CD4-positive, alpha-beta T cell (primary cell): ENCODE measurements at regions of chr19 and their contacts with region 1.

Region 1: DNA sequence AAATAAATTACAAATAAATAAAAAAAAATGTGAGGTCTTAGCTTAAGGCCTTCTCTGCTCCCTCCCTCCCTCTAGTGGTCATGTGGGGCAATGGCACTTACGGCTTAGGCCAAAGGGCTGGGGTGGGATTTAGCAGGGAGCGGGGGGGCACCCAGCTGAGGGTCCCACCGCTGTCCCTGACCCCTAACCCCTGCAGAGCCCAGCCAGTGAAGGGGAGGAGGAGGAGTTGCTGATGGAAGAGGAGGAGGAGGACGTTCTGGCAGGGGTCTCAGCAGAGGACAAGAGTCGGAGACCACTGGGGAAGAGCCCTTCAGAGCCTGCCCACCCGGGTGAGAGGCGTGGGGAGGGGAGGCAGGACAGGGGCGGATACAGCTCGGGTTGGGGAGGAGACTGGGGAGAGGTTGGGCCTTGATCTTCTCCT is 9.3 kb downstream of the MPND start:
- DNase-seq: peak; percentile 43 to 82 (median 57)
- ATAC-seq: peak; percentile 94
- H3K4me3 ChIP-seq: no peak overlapping the region
- H3K4me3 Mint-ChIP-seq: no peak overlapping the region
- H3K27ac ChIP-seq: no peak overlapping the region
- H3K27ac Mint-ChIP-seq: no peak overlapping the region
- H3K4me1 ChIP-seq: no peaks in the 10 kb centered on the region
- H3K4me1 Mint-ChIP-seq: no peaks in the 10 kb centered on the region
- H3K27me3 ChIP-seq: no peaks in the 10 kb centered on the region
- H3K27me3 Mint-ChIP-seq: no peaks in the 10 kb centered on the region
- CTCF ChIP-seq: peak; percentile 87

Region 2: DNA sequence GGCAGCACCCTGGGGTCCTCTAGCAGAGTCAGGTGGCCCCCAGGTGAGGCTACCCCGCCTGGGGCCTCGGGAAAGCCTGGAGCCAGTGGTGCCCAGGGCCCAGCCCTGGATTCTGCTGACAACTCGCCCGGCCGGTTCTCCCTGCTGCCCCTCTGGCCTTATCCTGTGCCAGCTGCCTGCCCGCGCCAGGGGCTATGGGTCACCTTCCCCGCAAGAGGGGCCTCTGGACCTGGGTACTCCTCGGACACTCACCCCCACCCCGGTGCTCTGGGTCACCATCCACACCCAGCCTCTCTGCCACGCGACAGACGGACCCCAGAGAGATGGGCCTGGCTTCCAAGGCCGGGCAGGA is 310.0 kb before region 1 on chr19:
- CTCF ChIA-PET with region 1: no interaction called
- POLR2A ChIA-PET with region 1: no interaction called
- intact Hi-C with region 1: no loop called
- DNase-seq: no peak
- ATAC-seq: no peak
- H3K4me3 ChIP-seq: no peak overlapping the region
- H3K4me3 Mint-ChIP-seq: no peak overlapping the region
- H3K27ac ChIP-seq: no peak overlapping the region
- H3K27ac Mint-ChIP-seq: no peak overlapping the region
- H3K4me1 ChIP-seq: peaks cover 14% of the 10 kb centered on the region
- H3K4me1 Mint-ChIP-seq: peaks cover 7% of the 10 kb centered on the region
- H3K27me3 ChIP-seq: no peaks in the 10 kb centered on the region
- H3K27me3 Mint-ChIP-seq: no peaks in the 10 kb centered on the region
- CTCF ChIP-seq: no peak

Region 3: DNA sequence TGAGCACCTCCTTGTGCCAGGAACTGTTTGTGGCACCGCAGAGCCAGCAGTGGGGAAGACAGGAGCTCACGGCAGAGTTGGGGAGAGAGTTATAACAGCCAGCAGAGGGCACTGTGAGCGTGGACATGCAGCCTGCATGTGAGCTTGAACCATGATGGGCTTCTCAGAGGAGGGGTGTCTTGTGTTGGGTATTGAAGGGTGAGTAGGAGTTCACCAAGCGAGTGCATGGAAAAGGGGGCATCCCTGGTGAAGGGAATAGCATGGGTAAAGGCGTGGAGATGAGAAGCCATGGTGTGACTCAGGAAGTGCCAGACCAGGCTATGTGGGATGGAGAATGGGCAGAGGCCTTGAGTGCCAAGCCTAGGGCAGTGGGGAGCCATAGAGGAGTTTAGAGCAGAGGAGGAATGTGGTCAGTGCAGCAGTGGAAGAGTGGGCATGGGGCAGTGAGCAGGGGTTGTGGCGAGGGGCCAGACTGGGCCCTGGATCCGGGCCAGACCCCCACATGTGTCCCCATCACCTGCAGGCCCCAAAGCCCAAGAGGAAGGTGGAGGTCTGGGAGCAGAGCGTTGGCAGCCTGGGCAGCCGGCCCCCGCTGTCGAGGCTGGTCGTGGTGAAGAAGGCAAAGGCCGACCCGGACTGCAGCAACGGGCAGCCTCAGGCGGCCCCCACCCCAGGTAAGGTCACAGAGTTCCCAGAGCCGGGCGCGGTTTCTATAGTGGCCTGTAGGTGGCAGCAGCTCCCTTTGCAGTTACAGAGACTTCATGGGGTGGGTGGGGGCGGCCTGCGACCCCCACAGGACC is 85.4 kb before region 1 on chr19:
- CTCF ChIA-PET with region 1: interaction called, 36 read pairs
- POLR2A ChIA-PET with region 1: no interaction called
- intact Hi-C with region 1: loop called (anchors 1 kb)
- DNase-seq: peak; percentile 44 to 75 (median 56)
- ATAC-seq: peak; percentile 70
- H3K4me3 ChIP-seq: no peak overlapping the region
- H3K4me3 Mint-ChIP-seq: no peak overlapping the region
- H3K27ac ChIP-seq: no peak overlapping the region
- H3K27ac Mint-ChIP-seq: no peak overlapping the region
- H3K4me1 ChIP-seq: peaks cover 20% of the 10 kb centered on the region
- H3K4me1 Mint-ChIP-seq: peaks cover 18% of the 10 kb centered on the region
- H3K27me3 ChIP-seq: no peaks in the 10 kb centered on the region
- H3K27me3 Mint-ChIP-seq: no peaks in the 10 kb centered on the region
- CTCF ChIP-seq: peak; percentile 79

Region 4: DNA sequence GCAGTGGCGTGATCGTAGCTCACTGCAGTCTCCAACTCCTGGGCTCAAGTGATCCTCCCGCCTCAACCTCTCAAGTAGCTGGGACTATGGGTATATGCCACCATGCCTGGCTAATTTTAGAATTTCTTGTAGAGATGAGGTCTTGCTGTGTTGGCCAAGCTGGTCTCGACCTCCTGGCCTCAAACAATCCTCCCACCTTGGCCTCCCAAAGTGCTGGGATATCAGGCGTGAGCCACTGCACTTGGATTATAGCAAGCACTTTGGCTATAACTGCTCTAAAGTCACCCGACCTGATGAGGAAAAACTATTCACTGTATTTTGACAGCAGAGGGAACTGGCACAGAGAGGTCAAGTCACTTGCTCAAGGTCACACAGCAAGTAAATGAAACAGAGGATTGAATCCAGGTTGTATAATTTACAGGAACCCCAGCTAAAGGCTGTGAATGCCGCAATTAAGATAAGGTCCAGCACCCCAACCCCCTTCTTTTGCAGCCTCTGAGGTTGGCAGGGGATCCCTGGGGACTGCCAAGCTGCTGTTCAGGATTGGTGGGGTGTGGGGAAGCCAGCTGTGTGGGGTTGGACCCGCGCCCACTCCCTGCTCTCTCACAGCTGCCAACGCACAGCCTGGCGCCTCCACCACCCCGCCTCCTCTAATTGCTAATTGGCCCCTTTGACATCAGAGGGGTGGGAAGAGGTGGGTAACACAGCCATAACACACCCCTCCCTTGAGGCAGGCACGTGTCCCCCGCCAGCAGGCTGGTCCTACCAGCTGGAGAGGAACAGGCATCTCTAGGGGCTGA is 56.5 kb before region 1 on chr19:
- CTCF ChIA-PET with region 1: no interaction called
- POLR2A ChIA-PET with region 1: no interaction called
- intact Hi-C with region 1: no loop called
- DNase-seq: no peak
- ATAC-seq: no peak
- H3K4me3 ChIP-seq: no peak overlapping the region
- H3K4me3 Mint-ChIP-seq: no peak overlapping the region
- H3K27ac ChIP-seq: no peak overlapping the region
- H3K27ac Mint-ChIP-seq: peak overlapping the region; percentile 30
- H3K4me1 ChIP-seq: peaks cover 14% of the 10 kb centered on the region
- H3K4me1 Mint-ChIP-seq: peaks cover 16% of the 10 kb centered on the region
- H3K27me3 ChIP-seq: no peaks in the 10 kb centered on the region
- H3K27me3 Mint-ChIP-seq: no peaks in the 10 kb centered on the region
- CTCF ChIP-seq: no peak

Region 5: GRCh38 chr19:4369888-4370260 is 17.2 kb after region 1 on chr19:
- CTCF ChIA-PET with region 1: interaction called, 19 read pairs
- POLR2A ChIA-PET with region 1: no interaction called
- intact Hi-C with region 1: no loop called
- DNase-seq: peak; percentile 58 to 89 (median 70)
- ATAC-seq: peak; percentile 74
- H3K4me3 ChIP-seq: peak overlapping the region; percentile 59
- H3K4me3 Mint-ChIP-seq: peak overlapping the region; percentile 90
- H3K27ac ChIP-seq: peak overlapping the region; percentile 78 to 87
- H3K27ac Mint-ChIP-seq: peak overlapping the region; percentile 90
- H3K4me1 ChIP-seq: peaks cover 75% of the 10 kb centered on the region
- H3K4me1 Mint-ChIP-seq: peaks cover 30% of the 10 kb centered on the region
- H3K27me3 ChIP-seq: no peaks in the 10 kb centered on the region
- H3K27me3 Mint-ChIP-seq: no peaks in the 10 kb centered on the region
- CTCF ChIP-seq: peak; percentile 65